ENCODE measurements at regions of chr15 and their contacts with region 1.

Region 1: DNA sequence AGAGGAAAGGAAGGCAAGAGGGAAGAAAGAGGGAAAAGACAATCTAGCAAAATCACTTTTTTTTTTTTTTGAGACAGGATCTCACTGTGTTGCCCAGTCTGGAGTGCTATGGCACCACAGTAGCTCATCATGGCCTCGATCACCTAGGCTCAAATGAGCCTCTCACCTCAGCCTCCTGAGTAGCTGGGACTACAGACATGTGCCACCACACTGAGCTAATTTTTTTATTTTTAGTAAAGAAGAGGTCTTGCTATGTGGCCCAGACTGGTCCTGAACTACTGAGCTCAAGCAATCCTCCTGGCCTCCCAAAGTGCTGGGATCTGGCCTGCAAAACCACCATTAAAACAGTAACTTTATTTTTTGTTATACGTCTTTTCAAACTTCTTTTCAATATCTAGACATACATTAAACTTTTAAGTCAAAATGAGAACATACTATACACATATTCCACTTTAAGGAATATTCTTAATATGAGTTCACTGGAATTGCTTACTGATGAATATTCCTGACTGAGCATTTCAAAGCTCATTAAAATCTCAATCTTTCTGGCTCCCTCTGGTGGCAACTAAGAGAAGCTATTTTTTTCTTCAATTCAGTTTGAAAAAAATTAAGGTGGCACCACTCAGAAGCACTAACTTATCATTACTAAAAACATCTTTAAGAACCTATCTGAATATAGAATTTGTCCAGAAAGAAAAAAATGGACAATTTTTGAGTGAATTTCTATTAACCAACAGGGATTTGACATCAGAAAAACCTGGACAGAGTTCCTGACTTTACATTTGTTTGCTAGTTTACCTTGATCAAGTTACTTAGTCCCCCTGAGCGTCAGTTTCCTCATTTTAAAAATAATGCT is 40.9 kb downstream of the UACA start:
- DNase-seq: no peak
- H3K4me3 Mint-ChIP-seq: no peak overlapping the region
- H3K27ac Mint-ChIP-seq: no peak overlapping the region
- H3K4me1 Mint-ChIP-seq: no peaks in the 10 kb centered on the region
- H3K27me3 Mint-ChIP-seq: peaks cover 36% of the 10 kb centered on the region

Region 2: GRCh38 chr15:69475769-69476358 is 1246.6 kb before region 1 on chr15:
- intact Hi-C with region 1: loop called (anchors 10 kb)
- DNase-seq: peak; percentile 59
- H3K4me3 Mint-ChIP-seq: no peak overlapping the region
- H3K27ac Mint-ChIP-seq: no peak overlapping the region
- H3K4me1 Mint-ChIP-seq: peaks cover 2% of the 10 kb centered on the region
- H3K27me3 Mint-ChIP-seq: peaks cover 23% of the 10 kb centered on the region

Region 3: DNA sequence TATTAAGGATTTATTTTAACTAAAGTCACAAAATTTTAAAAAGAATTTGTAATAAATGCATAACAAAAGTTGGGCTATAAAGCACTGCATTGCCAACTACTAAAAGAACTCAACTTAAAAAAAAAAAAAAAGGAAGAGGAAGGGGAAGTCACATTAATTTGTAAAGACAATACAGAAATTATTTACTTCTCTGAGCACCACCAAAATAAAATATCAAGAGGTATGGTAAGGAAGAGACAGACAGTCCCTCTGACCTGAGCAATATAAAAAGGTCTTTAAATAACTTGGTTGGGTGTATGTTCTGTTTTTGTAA is 42.6 kb before region 1 on chr15:
- intact Hi-C with region 1: loop called (anchors 2 kb)
- DNase-seq: no peak
- H3K4me3 Mint-ChIP-seq: no peak overlapping the region
- H3K27ac Mint-ChIP-seq: no peak overlapping the region
- H3K4me1 Mint-ChIP-seq: peaks cover 3% of the 10 kb centered on the region
- H3K27me3 Mint-ChIP-seq: peaks cover 43% of the 10 kb centered on the region

Measured in activated T-helper 2 cell treated with anti-CD3 and anti-CD28 coated beads, Interferon-gamma antibody, Interleukin-2, Interleukin-4, amounts not matched to agents 10 μg/mL and 5 μg/mL and 100 μg/mL, durations not matched to agents 14 hours and 24 hours and 36 hours (primary cell).